Activated CD8-positive, alpha-beta T cell treated with anti-CD3 and anti-CD28 coated beads, Interleukin-2, amount 10 ng/mL, durations not matched to agents 7 days and 5 days (primary cell): ENCODE measurements at regions of chr1 and their contacts with region 1.

Region 1: GRCh38 chr1:62906428-62906886 is 122.5 kb downstream of the ATG4C start:
- DNase-seq: no peak
- ATAC-seq: no peak
- H3K4me3 Mint-ChIP-seq: no peak overlapping the region
- H3K27ac Mint-ChIP-seq: no peak overlapping the region
- H3K4me1 Mint-ChIP-seq: peaks cover 3% of the 10 kb centered on the region
- H3K27me3 Mint-ChIP-seq: peaks cover 5% of the 10 kb centered on the region

Region 2: GRCh38 chr1:62841587-62842169 is 64.8 kb before region 1 on chr1:
- CTCF ChIA-PET with region 1: interaction called, 13 read pairs
- POLR2A ChIA-PET with region 1: no interaction called
- DNase-seq: peak; percentile 44
- ATAC-seq: no peak
- H3K4me3 Mint-ChIP-seq: no peak overlapping the region
- H3K27ac Mint-ChIP-seq: no peak overlapping the region
- H3K4me1 Mint-ChIP-seq: no peaks in the 10 kb centered on the region
- H3K27me3 Mint-ChIP-seq: no peaks in the 10 kb centered on the region

Region 3: GRCh38 chr1:62917805-62918204 is 11.3 kb after region 1 on chr1:
- CTCF ChIA-PET with region 1: no interaction called
- POLR2A ChIA-PET with region 1: no interaction called
- DNase-seq: no peak
- ATAC-seq: no peak
- H3K4me3 Mint-ChIP-seq: no peak overlapping the region
- H3K27ac Mint-ChIP-seq: no peak overlapping the region
- H3K4me1 Mint-ChIP-seq: no peaks in the 10 kb centered on the region
- H3K27me3 Mint-ChIP-seq: peaks cover 10% of the 10 kb centered on the region

Region 4: GRCh38 chr1:63004868-63005267 is 98.4 kb after region 1 on chr1:
- CTCF ChIA-PET with region 1: no interaction called
- POLR2A ChIA-PET with region 1: no interaction called
- DNase-seq: no peak
- ATAC-seq: no peak
- H3K4me3 Mint-ChIP-seq: no peak overlapping the region
- H3K27ac Mint-ChIP-seq: no peak overlapping the region
- H3K4me1 Mint-ChIP-seq: no peaks in the 10 kb centered on the region
- H3K27me3 Mint-ChIP-seq: no peaks in the 10 kb centered on the region